ENCODE measurements at regions of chr1 and their contacts with region 1.

Region 1: DNA sequence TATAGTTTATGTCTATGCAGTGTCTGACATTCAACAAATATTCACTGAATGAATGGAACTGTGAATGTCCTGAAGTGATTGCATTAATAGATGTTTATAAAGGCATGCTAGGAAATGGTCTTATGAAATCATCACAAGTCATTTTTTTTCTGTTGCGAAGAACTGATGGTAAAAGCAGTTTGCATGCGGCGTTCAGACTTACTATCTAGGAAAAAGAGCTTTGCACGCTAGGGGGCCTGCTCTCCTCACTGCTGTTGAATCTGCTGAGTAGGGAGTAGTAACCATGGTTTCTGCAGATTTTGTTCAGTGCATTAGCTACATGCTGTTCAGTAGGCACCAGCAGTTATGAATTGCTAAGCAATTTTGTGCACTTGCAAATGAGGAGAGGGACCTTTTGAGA is 57.9 kb downstream of the CENPF start:
- DNase-seq: peak; percentile 96
- ATAC-seq: peak; percentile 95
- H3K4me3 ChIP-seq: no peak overlapping the region
- H3K27ac ChIP-seq: no peak overlapping the region
- H3K4me1 ChIP-seq: peaks cover 5% of the 10 kb centered on the region
- H3K27me3 ChIP-seq: no peaks in the 10 kb centered on the region
- CTCF ChIP-seq: peak; percentile 88
- POLR2A ChIP-seq: no peak
- RAD21 ChIP-seq: peak; percentile 92

Region 2: DNA sequence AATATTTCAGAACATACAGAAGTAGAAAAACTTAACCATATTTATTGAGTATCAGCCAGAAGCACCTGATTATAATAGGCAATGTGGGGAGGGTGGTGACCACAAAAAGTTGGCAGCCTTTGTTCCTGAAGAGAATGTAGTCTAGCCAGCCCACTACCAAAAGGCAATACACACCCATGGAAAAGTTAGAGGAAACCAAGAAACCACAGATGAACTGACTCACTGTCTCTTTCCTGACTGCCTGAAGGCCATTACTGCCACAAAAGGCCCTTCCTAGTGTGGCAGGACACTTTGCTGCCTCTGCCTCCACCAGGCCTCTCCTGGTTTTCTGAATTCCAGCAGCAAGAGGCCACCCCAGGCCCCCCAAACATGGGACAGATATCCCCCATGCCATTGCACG is 687.7 kb before region 1 on chr1:
- CTCF ChIA-PET with region 1: no interaction called
- POLR2A ChIA-PET with region 1: no interaction called
- dilution Hi-C with region 1: no loop called
- in situ Hi-C with region 1: no loop called
- intact Hi-C with region 1: no loop called
- DNase-seq: no peak
- ATAC-seq: no peak
- H3K4me3 ChIP-seq: no peak overlapping the region
- H3K27ac ChIP-seq: no peak overlapping the region
- H3K4me1 ChIP-seq: no peaks in the 10 kb centered on the region
- H3K27me3 ChIP-seq: peaks cover 6% of the 10 kb centered on the region
- CTCF ChIP-seq: no peak
- POLR2A ChIP-seq: no peak
- RAD21 ChIP-seq: no peak

Region 3: DNA sequence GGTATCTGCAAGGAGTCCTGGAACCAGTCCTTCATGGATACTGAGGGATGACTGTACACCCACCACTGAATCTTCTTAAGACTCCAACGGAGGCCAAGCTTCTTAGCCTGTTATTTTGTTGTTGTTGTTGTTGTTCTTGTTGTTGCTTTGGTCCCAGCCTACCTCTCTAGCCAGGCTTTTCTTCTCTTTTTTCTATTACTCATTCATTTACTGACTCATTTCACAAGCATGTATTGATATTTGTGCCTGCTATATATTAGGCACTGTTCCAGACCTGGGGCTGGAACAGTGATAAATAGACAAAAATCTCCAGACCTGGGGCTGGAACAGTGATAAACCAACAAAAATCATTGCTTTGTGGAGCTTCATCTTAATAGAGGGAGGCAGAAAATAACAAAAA is 37.4 kb before region 1 on chr1:
- CTCF ChIA-PET with region 1: no interaction called
- POLR2A ChIA-PET with region 1: no interaction called
- dilution Hi-C with region 1: no loop called
- in situ Hi-C with region 1: no loop called
- intact Hi-C with region 1: no loop called
- DNase-seq: no peak
- ATAC-seq: no peak
- H3K4me3 ChIP-seq: no peak overlapping the region
- H3K27ac ChIP-seq: no peak overlapping the region
- H3K4me1 ChIP-seq: peaks cover 3% of the 10 kb centered on the region; the same call in 1 of the 2 replicates
- H3K27me3 ChIP-seq: no peaks in the 10 kb centered on the region
- CTCF ChIP-seq: no peak
- POLR2A ChIP-seq: no peak
- RAD21 ChIP-seq: no peak

Region 4: DNA sequence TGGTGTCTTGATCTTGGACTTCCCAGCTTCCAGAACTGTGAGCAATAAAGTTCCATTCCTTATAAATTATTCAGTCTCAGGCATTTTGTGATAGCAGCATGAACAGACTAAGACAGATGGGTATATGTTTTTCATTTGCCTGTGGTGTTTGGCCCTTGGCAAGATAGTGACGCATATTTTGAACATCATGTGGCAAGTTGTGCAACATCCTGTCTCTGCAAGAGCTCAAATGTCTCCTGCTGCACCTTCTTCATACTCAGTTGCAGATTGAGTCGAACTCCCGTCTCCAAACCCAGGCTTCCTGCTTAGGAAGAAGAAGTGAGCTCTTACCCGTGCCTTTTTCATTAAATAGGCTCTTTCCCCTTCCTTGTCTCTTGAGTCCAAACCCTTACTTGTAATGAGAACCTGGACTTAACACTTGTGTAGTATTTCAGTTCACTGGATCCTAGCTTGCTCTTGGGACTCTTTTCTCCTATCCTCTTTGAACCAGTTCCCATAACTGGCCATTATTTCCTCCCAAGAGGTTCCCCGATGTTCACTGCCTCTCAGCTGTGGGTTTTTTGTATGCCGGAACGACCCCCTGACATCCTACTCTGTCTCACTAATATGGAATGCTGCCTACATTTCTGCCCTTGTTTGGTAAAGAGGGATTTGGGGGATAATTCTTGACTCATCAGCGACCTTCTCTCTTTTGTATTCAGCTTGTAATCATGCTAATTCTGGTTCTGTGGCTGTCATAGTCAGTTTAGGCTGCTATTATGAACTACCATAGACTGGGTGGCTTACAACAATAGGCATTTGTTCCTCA is 296.7 kb after region 1 on chr1:
- CTCF ChIA-PET with region 1: no interaction called
- POLR2A ChIA-PET with region 1: no interaction called
- dilution Hi-C with region 1: no loop called
- in situ Hi-C with region 1: no loop called
- intact Hi-C with region 1: loop called (anchors 2 kb)
- DNase-seq: peak; percentile 100
- ATAC-seq: peak; percentile 82
- H3K4me3 ChIP-seq: peak overlapping the region; percentile 16; the same call in 1 of the 2 replicates
- H3K27ac ChIP-seq: peak overlapping the region; percentile 95
- H3K4me1 ChIP-seq: peaks cover 10% of the 10 kb centered on the region
- H3K27me3 ChIP-seq: no peaks in the 10 kb centered on the region
- CTCF ChIP-seq: no peak
- POLR2A ChIP-seq: peak; percentile 89
- RAD21 ChIP-seq: peak; percentile 28; the same call in 1 of the 2 replicates

Region 5: DNA sequence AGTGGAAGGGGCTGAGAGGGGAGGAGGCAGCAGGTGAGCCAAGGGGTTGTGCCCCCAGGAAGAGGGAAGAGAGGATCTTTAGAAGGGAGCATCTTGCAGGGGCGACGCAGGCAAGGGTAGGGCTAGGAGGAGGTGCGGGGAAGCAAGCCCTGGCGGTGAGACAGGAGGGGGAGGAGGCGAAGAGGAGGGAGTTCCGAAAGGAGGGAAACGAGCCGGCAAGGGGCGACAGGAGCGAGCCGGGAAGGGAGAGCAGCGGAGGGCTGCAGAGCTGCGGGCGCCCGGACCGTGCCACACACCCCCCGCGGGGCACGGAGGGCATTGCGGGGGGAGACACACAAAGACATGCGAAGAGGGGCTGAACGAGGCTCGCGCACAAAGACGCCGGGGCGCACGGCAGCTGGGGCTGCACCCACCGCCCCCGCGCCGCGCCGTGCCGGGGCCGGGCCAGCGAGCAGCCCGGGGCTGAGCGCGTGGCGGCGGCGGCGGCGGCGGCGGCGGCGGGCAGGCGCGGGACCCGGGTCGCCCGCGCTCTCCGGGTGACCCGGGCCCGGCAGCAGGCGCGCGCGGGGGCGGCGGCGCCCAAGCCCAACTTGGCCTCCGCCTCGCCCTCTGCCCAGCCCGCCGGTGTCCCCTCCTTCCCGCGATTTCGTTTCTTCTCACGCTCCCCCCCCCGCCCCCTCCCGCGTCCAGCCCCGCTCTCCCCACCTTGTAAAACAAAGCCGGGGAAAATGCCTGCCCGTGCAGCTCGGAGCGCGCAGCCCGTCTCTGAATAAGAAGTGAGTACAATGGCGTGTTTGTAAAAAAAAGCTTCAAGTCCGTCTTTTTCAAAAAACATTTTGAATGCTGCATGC is 421.9 kb after region 1 on chr1 and contains the start of gene KCNK2:
- CTCF ChIA-PET with region 1: no interaction called
- POLR2A ChIA-PET with region 1: no interaction called
- dilution Hi-C with region 1: no loop called
- in situ Hi-C with region 1: no loop called
- intact Hi-C with region 1: loop called (anchors 2 kb)
- DNase-seq: peak; percentile 52
- ATAC-seq: peak; percentile 76
- H3K4me3 ChIP-seq: peak within 1 kb of the TSS; percentile 85
- H3K27ac ChIP-seq: peak within 1 kb of the TSS; percentile 39; the same call in 1 of the 2 replicates
- H3K4me1 ChIP-seq: peaks cover 2% of the 10 kb centered on the region; the same call in 1 of the 2 replicates
- H3K27me3 ChIP-seq: peaks cover 4% of the 10 kb centered on the region; the same call in 1 of the 2 replicates
- CTCF ChIP-seq: no peak
- POLR2A ChIP-seq: no peak
- RAD21 ChIP-seq: no peak
- total RNA-seq, gene KCNK2: 86.9 TPM in 2 replicates

Region 6: GRCh38 chr1:215273838-215274516 is 613.1 kb after region 1 on chr1:
- CTCF ChIA-PET with region 1: interaction called, 3 read pairs
- POLR2A ChIA-PET with region 1: no interaction called
- dilution Hi-C with region 1: no loop called
- in situ Hi-C with region 1: no loop called
- intact Hi-C with region 1: loop called (anchors 5 kb)
- DNase-seq: peak; percentile 91
- ATAC-seq: peak; percentile 82
- H3K4me3 ChIP-seq: no peak overlapping the region
- H3K27ac ChIP-seq: peak overlapping the region; percentile 53
- H3K4me1 ChIP-seq: peaks cover 9% of the 10 kb centered on the region
- H3K27me3 ChIP-seq: no peaks in the 10 kb centered on the region
- CTCF ChIP-seq: no peak
- POLR2A ChIP-seq: no peak
- RAD21 ChIP-seq: no peak